H1 (cell line): ENCODE measurements at regions of chr1 and their contacts with region 1.

Region 1: DNA sequence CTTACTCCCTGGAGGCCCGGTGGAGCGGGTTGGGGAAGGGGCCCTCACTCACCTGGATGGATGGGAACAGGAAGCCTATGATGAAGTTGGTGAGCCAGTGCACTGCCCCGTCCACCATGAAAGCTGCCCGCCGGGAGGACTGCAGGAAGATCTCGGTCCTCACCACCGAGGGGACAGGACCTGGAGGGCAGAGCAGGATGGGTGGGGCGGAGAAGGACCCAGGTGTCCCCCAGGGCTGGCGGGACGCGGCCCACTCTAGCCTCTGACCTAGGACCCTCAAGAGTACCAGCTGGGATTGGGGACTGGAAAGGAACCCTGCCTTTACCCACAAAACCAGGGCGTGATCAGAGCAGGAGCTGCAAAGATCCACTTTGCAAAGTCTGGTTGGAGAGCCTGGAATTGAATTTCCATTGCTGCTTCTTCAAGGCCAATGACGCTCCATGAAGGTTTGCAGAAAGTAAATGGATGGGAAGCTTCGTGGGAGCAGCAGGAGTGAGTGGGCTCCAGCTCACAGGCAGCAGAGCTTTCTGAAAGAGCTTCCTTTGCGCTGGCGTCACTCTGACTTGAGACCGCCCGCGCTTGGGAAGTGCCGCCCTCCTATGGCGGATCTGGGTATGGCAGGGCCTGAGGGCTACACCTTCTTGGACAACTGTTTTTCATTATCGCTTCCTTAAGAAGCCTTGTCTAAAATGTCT is 21.4 kb downstream of the SLC2A7 start:
- DNase-seq: peak; percentile 53 to 97
- H3K4me3 ChIP-seq: no peak overlapping the region
- H3K27ac ChIP-seq: no peak overlapping the region
- H3K4me1 ChIP-seq: peaks cover 0 to 2% (median 0%) of the 10 kb centered on the region in 4 experiments; a peak in 1 of 7 replicates
- H3K27me3 ChIP-seq: no peaks in the 10 kb centered on the region
- CTCF ChIP-seq: peak; percentile 88 to 94 (median 93)
- EP300 ChIP-seq: no peak
- POLR2A ChIP-seq: no peak
- RAD21 ChIP-seq: peak; percentile 85 to 88

Region 2: DNA sequence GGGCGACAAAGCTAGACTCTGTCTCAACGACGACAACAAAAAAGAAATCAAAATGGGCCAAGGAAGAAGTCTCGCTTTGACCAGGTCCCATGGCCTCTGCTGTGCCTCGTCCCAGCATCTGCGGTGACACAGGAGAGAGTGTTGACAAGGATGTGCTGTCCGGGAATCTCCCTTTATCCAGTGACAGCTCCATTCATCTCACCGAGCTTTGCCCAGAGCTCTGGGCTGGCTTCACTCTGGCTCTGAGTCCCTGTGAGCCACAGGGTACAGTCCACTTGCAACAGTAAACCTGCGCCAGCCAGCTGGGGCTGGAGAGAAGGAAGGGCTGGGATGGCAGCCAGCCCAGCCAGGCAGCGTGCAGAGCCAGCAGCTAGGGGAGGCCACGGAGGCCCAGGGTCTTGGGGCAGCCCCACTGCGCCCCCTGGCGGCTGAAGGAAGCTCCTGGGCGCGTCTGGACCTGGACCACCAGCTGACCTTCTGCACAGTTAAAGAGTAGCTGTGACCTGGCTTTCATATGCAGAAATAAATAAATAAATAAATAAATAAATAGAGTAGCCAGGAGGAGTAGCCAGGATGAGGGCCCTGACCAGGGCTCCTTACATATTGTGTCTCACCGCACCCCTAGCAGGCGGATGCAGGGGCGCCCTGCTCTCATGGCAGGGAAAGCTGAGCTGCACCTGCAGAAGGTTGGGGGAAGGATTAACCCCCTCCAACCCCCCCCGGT is 156.0 kb before region 1 on chr1:
- CTCF ChIA-PET with region 1: interaction called, 15 read pairs
- POLR2A ChIA-PET with region 1: no interaction called
- DNase-seq: peak; percentile 69 to 96
- H3K4me3 ChIP-seq: no peak overlapping the region
- H3K27ac ChIP-seq: no peak overlapping the region
- H3K4me1 ChIP-seq: peaks cover 0 to 4% (median 0%) of the 10 kb centered on the region in 4 experiments; a peak in 2 of 7 replicates
- H3K27me3 ChIP-seq: no peaks in the 10 kb centered on the region
- CTCF ChIP-seq: peak; percentile 88 to 99 (median 98)
- EP300 ChIP-seq: no peak
- POLR2A ChIP-seq: no peak
- RAD21 ChIP-seq: peak; percentile 88 to 93

Region 3: GRCh38 chr1:8873506-8874229 is 131.2 kb before region 1 on chr1:
- CTCF ChIA-PET with region 1: interaction called, 14 read pairs
- POLR2A ChIA-PET with region 1: interaction called, 11 read pairs
- DNase-seq: peak; percentile 63 to 84
- H3K4me3 ChIP-seq: peak overlapping the region in 1 of 4 experiments; percentile 25; a peak in 1 of 8 replicates
- H3K27ac ChIP-seq: peak overlapping the region; percentile 59; the same call in 1 of the 2 replicates
- H3K4me1 ChIP-seq: peaks cover 12 to 28% (median 16%) of the 10 kb centered on the region in 4 experiments
- H3K27me3 ChIP-seq: no peaks in the 10 kb centered on the region
- CTCF ChIP-seq: no peak
- EP300 ChIP-seq: peak; percentile 9 to 14; a peak in 1 of 3 replicates
- POLR2A ChIP-seq: peak in 1 of 2 experiments; percentile 62; a peak in 2 of 3 replicates
- RAD21 ChIP-seq: peak in 1 of 2 experiments; percentile 18; a peak in 1 of 4 replicates

Region 4: GRCh38 chr1:8941906-8942305 is 62.9 kb before region 1 on chr1:
- CTCF ChIA-PET with region 1: interaction called, 12 read pairs
- POLR2A ChIA-PET with region 1: interaction called, 4 read pairs
- DNase-seq: no peak
- H3K4me3 ChIP-seq: no peak overlapping the region
- H3K27ac ChIP-seq: no peak overlapping the region
- H3K4me1 ChIP-seq: peaks cover 7 to 24% (median 14%) of the 10 kb centered on the region in 4 experiments
- H3K27me3 ChIP-seq: no peaks in the 10 kb centered on the region
- CTCF ChIP-seq: no peak
- EP300 ChIP-seq: no peak
- POLR2A ChIP-seq: no peak
- RAD21 ChIP-seq: no peak

Region 5: DNA sequence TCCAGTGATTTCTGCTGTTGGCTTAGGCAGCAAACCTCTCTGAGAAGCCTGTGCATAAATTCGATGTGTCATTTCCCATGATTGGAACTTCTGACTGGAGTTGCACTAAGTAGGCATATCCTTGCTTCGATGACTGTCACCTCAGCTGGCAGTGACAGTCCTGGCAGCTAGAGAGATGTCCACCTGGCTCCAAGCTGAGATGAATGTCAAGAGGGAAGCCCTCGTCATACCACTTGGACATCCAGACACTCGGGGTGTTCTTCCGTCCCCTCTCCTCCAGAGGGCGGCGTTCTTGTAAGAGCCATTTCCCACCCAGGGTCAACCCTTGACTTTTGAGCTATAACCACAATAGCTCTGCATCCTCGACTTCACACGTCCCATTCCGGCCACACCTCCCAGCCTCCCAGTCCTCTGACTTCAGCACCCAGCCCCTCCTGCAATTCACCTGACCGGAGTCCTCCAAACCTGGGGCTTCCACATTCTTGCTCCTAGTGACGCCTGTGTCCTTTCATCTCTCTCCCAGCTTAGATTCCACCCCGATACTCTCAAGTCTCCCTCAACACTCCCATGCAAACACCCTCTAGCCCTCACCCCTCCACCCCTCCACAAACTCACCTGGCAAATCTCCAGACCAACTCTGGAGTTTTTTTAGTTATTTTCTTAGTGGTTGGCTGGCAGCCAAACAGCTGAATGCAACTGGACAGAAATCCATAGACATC is 41.9 kb before region 1 on chr1:
- CTCF ChIA-PET with region 1: interaction called, 15 read pairs
- POLR2A ChIA-PET with region 1: no interaction called
- DNase-seq: peak; percentile 62 to 76
- H3K4me3 ChIP-seq: no peak overlapping the region
- H3K27ac ChIP-seq: no peak overlapping the region
- H3K4me1 ChIP-seq: peaks cover 0 to 2% (median 1%) of the 10 kb centered on the region in 4 experiments; a peak in 4 of 7 replicates
- H3K27me3 ChIP-seq: no peaks in the 10 kb centered on the region; a peak in 1 of 7 replicates
- CTCF ChIP-seq: peak; percentile 73 to 87 (median 78)
- EP300 ChIP-seq: no peak
- POLR2A ChIP-seq: no peak
- RAD21 ChIP-seq: peak; percentile 46 to 64; a peak in 3 of 4 replicates

Region 6: GRCh38 chr1:9061252-9061960 is 56.6 kb after region 1 on chr1:
- CTCF ChIA-PET with region 1: interaction called, 10 read pairs
- POLR2A ChIA-PET with region 1: no interaction called
- DNase-seq: no peak
- H3K4me3 ChIP-seq: no peak overlapping the region
- H3K27ac ChIP-seq: no peak overlapping the region
- H3K4me1 ChIP-seq: peaks cover 0 to 3% (median under 1%) of the 10 kb centered on the region in 4 experiments; a peak in 3 of 7 replicates
- H3K27me3 ChIP-seq: no peaks in the 10 kb centered on the region
- CTCF ChIP-seq: no peak
- EP300 ChIP-seq: no peak
- POLR2A ChIP-seq: no peak
- RAD21 ChIP-seq: no peak